SK-N-SH (cell line): ENCODE measurements at regions of chr12 and their contacts with region 1.

Region 1: GRCh38 chr12:13362260-13362841 is 165.8 kb downstream of the EMP1 start:
- DNase-seq: peak; percentile 65
- H3K4me3 ChIP-seq: 0 out of 4 replicates have a peak overlapping the region, but pooled peaks of 1 of the 2 experiments have one; percentile 33
- H3K27ac ChIP-seq: no peak overlapping the region
- H3K4me1 ChIP-seq: no peaks in the 10 kb centered on the region
- H3K27me3 ChIP-seq: peaks cover 4% of the 10 kb centered on the region; the same call in 1 of the 2 replicates
- CTCF ChIP-seq: peak; percentile 88
- EP300 ChIP-seq: no peak
- RAD21 ChIP-seq: peak; percentile 74

Region 2: DNA sequence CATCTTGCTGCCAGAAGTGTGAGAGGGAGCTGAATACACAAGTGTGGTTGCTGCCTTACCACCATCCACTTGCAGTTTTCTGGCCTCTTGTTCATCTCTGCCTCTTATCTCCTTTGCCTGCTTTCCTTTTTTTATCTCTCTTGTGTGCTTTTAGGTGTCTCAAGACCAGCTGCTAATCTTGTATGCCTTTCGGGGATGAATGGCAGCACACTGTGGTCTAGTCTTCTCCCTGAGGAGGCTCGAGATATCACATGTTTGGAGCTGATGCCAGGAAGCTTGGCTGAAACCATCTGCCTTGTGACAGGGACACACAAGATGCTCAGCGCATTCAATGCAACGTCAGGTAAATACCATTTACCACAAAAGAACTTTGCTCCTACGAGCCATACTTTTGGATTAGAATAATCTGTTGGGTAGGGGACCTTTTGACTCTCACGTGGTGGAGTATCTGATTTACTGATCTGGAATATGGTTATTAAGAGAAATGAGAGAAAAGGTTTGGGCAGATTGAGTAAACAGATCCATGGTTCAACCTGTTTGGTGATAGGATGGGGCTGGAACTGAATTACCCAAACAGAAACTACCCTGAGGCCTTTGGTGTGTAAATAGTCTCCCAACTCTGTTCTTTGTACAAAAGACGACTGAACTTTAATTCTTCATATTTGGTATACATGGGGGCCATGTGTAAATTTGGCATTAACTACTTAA is 300.8 kb before region 1 on chr12:
- CTCF ChIA-PET with region 1: no interaction called
- POLR2A ChIA-PET with region 1: no interaction called
- DNase-seq: no peak
- H3K4me3 ChIP-seq: no peak overlapping the region
- H3K27ac ChIP-seq: no peak overlapping the region
- H3K4me1 ChIP-seq: no peaks in the 10 kb centered on the region
- H3K27me3 ChIP-seq: no peaks in the 10 kb centered on the region
- CTCF ChIP-seq: no peak
- EP300 ChIP-seq: no peak
- RAD21 ChIP-seq: no peak

Region 3: DNA sequence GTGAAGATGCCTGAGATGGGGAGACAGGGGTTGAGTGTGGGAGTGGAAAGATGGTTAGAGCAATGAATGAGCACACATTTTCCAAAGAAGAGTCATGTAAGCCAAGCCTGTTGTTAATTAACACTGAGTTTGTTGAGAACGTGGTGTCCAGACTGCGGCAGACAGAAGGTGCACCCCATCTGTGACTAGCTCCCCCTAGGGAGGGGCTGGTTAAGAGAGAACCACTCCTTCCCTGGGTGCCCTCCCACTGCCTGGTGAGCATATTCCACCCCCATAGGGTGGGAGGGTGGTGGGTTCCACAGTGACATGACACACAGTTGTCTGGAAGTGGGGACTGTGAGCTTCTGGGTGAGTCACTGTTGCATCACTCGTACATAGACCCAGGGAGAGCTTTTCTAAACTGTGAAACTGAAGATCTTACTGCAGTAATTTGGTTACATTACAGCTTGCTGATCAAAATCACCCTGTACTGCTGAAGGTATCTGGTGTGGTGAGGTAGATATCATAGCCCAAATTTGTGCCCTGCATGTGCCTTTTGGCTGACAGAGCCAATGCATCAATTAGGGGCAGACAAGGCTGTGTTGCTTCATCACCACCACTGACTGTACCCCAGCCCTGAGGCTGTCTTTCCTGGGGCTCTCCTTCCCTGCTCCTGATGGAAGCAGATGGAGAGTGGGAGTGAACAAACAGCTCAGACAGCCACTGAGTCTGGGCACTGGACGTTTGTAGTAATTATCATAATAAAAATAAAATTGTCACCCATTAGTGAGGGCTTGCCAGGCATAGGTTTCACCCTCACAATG is 14.9 kb before region 1 on chr12:
- CTCF ChIA-PET with region 1: interaction called, 23 read pairs
- POLR2A ChIA-PET with region 1: no interaction called
- DNase-seq: no peak
- H3K4me3 ChIP-seq: no peak overlapping the region
- H3K27ac ChIP-seq: peak overlapping the region in 1 of 2 experiments; percentile 20; a peak in 1 of 4 replicates
- H3K4me1 ChIP-seq: no peaks in the 10 kb centered on the region
- H3K27me3 ChIP-seq: no peaks in the 10 kb centered on the region
- CTCF ChIP-seq: no peak; the same call in 1 of the 2 replicates
- EP300 ChIP-seq: no peak
- RAD21 ChIP-seq: no peak

Region 4: DNA sequence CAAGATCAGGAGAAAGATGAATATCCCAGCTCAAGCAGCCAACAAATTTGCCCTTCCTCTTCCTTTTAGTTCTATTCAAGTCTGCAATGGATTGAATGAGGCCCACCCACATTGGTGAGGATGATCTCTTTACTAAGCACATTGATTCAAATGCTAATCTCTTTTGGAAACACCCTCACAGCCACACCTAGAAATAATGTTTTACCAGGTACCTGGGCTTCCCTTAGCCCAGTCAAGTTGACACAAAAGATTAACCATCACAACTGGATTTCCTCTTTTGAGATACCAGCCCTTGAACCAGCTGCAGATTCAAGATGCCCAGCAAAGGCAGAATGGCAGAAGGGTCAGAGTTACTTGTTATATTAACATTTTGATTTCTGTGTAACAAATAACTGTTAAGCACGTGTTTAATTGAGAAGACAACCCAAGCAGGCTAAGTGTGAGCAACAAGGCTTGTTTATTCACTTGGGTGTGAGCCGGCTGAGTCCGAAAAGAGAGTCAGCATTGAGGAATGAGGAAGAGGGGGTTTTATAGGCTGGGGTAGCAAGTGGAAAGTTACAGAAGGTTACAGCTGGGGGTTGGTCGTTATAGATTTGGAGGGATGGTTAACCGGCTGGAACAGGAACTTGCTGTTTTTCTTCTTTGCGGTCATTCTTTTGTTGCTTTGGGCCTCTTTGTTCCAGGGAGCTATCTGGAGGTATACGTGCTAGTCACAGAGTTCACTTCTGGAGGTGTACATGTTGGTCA is 14.4 kb after region 1 on chr12:
- CTCF ChIA-PET with region 1: interaction called, 21 read pairs
- POLR2A ChIA-PET with region 1: no interaction called
- DNase-seq: no peak
- H3K4me3 ChIP-seq: no peak overlapping the region
- H3K27ac ChIP-seq: no peak overlapping the region
- H3K4me1 ChIP-seq: no peaks in the 10 kb centered on the region
- H3K27me3 ChIP-seq: 0 out of 2 replicates have a peak, but pooled peaks cover 4% of the 10 kb centered on the region
- CTCF ChIP-seq: no peak
- EP300 ChIP-seq: no peak
- RAD21 ChIP-seq: no peak

Region 5: DNA sequence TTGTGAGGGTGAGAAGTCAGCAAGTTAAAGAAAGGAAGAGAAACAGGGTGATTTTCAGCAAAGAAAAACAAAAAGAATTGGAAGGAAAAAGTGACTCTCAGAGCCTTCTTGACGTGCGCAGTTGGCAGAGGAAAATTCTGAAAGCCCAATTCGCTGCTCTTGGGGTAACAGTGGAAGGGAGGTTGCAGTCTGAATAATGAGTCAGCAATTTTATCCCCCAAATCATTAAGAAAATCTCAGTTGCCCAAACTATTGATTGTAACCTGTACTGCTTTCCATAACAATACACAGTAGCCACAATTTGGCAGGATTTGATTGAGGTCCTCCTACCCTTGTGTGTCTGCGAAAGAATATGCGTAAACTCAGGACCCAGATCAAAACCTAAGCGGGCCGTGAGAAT is 143.3 kb after region 1 on chr12:
- CTCF ChIA-PET with region 1: no interaction called
- POLR2A ChIA-PET with region 1: no interaction called
- DNase-seq: no peak
- H3K4me3 ChIP-seq: no peak overlapping the region
- H3K27ac ChIP-seq: no peak overlapping the region
- H3K4me1 ChIP-seq: no peaks in the 10 kb centered on the region
- H3K27me3 ChIP-seq: no peaks in the 10 kb centered on the region; the same call in 1 of the 2 replicates
- CTCF ChIP-seq: no peak
- EP300 ChIP-seq: no peak
- RAD21 ChIP-seq: no peak

Region 6: GRCh38 chr12:13631873-13632272 is 269.5 kb after region 1 on chr12:
- CTCF ChIA-PET with region 1: no interaction called
- POLR2A ChIA-PET with region 1: no interaction called
- DNase-seq: no peak
- H3K4me3 ChIP-seq: no peak overlapping the region
- H3K27ac ChIP-seq: no peak overlapping the region
- H3K4me1 ChIP-seq: no peaks in the 10 kb centered on the region
- H3K27me3 ChIP-seq: no peaks in the 10 kb centered on the region
- CTCF ChIP-seq: no peak
- EP300 ChIP-seq: no peak
- RAD21 ChIP-seq: no peak

Region 7: DNA sequence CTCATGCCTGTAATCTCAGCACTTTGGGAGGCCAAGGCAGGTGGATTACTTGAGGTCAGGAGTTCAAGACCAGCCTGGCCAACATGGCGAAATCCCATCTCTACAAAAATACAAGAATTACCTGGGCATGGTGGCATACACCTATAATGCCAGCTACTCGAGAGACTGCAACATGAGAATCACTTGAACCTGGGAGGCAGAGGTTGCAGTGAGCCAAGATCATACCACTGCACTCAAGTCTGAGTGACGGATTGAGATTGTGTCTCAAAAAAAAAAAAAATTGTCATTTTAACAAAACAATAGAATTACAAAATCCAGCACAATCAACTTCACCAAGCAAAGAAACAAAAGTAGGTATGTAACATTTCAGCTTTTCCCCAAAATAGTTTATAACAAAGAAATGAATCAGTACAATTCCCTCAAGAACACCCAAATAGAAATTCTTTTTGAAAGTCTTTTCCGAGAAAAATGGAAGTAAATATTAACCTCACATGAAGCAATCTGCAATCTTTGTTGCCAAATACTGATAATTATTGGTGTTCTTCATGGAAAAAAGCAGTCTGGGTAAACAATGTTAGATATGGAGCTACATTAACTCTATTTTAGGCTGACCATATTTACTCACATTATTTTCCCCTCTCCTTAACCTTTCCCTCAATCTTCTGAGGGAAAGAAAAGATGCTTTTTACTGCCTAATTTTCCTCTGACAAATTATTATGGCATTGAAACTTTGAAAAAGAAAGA is 837.3 kb after region 1 on chr12:
- CTCF ChIA-PET with region 1: no interaction called
- POLR2A ChIA-PET with region 1: no interaction called
- DNase-seq: no peak
- H3K4me3 ChIP-seq: no peak overlapping the region
- H3K27ac ChIP-seq: no peak overlapping the region
- H3K4me1 ChIP-seq: no peaks in the 10 kb centered on the region
- H3K27me3 ChIP-seq: no peaks in the 10 kb centered on the region
- CTCF ChIP-seq: no peak
- EP300 ChIP-seq: no peak
- RAD21 ChIP-seq: no peak